Activated CD4-positive, alpha-beta T cell treated with anti-CD3 and anti-CD28 coated beads, Interleukin-2, amount 10 ng/mL, durations not matched to agents 7 days and 5 days (primary cell): ENCODE measurements at regions of chr7 and their contacts with region 1.

Region 1: DNA sequence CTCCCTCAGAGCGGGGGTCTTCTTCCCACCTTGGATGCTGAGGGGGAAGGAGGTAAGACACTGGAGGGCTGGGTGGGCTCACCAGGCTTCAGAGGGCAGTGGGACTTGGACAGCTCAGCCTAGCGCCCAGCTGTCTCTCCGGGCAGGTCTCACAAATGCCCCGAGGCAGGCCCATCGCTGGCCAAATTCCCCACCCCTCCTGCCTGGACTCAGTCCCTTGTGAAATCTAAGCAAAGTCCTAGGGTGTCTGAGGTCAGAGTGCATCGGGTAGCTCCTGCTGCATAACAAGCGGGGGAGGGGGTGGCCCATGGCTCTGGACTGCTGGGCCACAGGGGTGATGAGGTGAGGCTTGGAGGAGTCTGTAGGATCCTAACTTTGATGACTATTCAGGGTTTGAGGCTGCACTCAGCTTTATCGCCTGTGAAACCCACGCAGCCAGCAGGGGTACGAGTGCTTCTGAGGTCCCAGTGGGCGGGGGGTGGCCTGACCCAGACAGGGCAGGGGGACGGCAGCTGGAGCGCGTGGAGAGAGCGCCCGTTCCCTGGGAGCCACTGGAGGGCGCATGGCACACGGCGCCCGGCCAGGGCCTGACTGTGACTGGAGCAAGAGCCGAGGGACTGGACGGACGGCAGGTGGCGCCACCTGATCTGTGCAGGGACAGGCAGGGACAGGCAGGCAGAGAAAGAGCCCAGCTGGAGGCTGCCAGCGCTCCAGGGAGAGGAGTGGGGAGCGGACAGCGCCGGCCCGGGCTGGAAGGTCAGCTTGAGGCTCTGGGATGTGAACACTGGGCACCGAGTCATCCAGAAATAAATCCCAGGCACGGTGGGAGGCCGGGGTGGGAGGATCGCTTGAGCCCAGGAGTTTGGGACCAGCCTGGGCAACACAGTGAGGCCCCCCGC is 10.0 kb downstream of the CYP2W1 start:
- DNase-seq: peak; percentile 97
- H3K4me3 Mint-ChIP-seq: no peak overlapping the region
- H3K27ac Mint-ChIP-seq: no peak overlapping the region
- H3K4me1 Mint-ChIP-seq: peaks cover 4% of the 10 kb centered on the region
- H3K27me3 Mint-ChIP-seq: no peaks in the 10 kb centered on the region

Region 2: DNA sequence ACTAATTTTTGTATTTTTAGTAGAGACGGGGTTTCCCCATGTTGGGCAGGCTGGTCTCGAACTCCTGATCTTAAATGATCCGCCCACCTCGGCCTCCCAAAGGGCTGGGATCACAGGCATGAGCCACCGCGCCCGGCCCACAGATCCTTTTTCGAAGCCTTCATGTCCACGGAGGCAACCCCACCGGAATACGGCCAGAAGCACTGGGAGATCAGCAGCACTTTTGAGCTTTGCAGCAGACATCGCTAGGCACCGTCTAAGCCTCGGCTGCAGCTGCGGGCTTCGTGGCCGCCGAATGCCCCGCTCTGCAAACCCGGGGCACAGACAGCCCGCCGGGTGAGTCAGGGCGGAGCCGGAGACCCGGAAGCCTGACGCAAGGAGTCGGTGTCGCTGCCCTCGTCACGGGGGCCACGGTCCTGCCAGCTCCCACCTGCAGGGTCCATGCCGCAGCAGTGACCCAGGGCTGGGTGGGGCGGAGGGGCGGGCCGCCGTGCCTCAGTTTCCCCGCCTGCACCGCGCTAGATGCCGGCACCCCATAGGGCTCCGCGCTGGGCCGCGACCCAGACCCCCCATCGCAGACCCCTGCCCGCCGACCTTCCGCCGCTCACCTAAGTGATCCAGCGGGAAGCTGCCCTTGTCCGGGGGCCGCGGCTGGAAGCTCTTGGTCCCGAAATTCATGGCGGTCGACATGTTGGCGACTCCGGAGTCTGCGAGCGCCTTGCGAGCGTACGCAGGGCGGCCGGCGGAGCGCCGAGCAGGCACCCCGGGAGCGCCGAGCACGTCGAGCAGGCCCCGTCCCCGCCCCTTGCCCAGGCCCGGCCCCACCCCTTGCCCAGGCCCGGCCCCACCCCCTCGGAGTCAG is 17.9 kb before region 1 on chr7 and contains the start of gene COX19:
- CTCF ChIA-PET with region 1: interaction called, 61 read pairs
- POLR2A ChIA-PET with region 1: interaction called, 3 read pairs
- DNase-seq: peak; percentile 87
- H3K4me3 Mint-ChIP-seq: peak within 1 kb of the TSS; percentile 91
- H3K27ac Mint-ChIP-seq: peak within 1 kb of the TSS; percentile 91
- H3K4me1 Mint-ChIP-seq: peaks cover 28% of the 10 kb centered on the region
- H3K27me3 Mint-ChIP-seq: no peaks in the 10 kb centered on the region
- total RNA-seq, gene COX19: 18.2 to 20.1 TPM

Region 3: DNA sequence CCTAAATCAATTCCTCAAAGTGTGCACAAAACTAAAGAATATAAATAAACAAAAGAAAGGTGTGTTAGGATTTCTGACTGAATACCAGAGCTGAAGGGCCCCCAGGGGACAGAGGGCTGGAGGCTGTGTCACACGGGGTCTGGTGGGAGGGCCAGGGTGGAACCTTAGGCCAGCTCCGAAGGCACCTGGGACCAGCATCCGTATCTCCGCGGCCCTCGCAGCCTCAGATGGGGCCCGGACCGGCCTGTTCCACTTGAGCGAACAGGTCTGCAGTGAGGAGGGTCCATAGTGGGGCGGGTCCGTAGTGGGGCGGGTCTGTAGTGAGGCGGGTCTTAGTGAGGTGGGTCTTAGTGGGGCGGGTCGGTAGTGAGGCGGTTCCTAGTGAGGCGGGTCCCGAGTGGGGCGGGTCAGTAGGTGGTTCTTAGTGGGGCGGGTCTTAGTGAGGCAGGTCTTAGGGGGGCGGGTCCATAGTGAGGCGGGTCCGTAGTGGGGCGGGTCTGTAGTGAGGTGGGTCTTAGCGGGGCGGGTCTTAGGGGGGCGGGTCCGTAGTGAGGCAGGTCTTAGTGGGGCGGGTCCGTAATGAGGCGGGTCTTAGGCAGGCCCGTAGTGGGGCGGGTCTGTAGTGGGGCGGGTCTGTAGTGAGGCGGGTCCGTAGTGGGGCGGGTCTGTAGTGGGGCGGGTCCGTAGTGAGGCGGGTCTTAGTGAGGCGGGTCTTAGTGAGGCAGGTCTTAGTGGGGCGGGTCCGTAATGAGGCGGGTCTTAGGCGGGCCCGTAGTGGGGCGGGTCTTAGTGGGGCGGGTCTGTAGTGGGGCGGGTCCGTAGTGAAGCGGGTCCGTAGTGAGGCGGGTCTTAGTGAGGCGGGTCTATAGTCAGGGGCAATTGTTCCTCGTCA is 66.5 kb after region 1 on chr7:
- CTCF ChIA-PET with region 1: interaction called, 154 read pairs
- POLR2A ChIA-PET with region 1: interaction called, 3 read pairs
- DNase-seq: peak; percentile 28
- H3K4me3 Mint-ChIP-seq: no peak overlapping the region
- H3K27ac Mint-ChIP-seq: peak overlapping the region; percentile 69
- H3K4me1 Mint-ChIP-seq: peaks cover 30% of the 10 kb centered on the region
- H3K27me3 Mint-ChIP-seq: no peaks in the 10 kb centered on the region

Region 4: DNA sequence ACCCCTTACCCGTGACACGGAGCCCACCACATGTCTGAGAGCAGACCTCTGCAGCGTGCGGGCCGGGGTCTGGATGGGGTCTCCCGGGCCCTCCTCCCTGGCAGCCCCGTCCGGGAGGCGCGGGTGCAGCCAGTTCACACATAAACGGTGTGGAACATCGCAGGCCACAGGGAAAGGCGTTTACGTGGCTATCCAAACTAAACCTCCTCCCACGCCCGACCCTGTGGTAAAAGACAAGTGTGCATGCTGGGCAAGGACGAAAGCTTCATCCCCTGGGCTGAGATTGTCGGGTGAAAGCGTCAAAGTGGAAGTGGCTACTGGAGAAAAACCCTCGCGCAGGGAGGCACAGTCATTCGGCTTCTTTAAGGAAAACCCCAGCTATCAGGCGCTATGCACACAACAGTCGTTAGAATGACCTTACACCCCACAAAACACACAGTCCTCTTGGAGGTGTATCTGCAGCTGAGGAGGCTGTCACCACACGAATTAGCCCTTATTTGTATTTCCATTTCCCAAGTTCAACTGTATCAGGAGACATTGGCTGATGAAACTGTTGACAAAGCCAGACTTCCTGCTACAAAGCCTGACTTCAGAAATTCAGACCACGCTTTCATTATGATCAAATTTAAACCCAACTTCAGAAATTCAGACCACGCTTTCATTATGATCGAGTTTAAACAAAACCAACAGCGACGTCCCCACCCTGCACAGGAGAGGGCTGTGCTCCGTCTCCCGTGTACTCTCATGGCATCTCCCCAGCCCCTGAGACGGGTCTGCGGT is 110.2 kb after region 1 on chr7:
- CTCF ChIA-PET with region 1: interaction called, 10 read pairs
- POLR2A ChIA-PET with region 1: no interaction called
- DNase-seq: no peak
- H3K4me3 Mint-ChIP-seq: peak overlapping the region; percentile 6
- H3K27ac Mint-ChIP-seq: peak overlapping the region; percentile 74
- H3K4me1 Mint-ChIP-seq: peaks cover 22% of the 10 kb centered on the region
- H3K27me3 Mint-ChIP-seq: no peaks in the 10 kb centered on the region

Region 5: DNA sequence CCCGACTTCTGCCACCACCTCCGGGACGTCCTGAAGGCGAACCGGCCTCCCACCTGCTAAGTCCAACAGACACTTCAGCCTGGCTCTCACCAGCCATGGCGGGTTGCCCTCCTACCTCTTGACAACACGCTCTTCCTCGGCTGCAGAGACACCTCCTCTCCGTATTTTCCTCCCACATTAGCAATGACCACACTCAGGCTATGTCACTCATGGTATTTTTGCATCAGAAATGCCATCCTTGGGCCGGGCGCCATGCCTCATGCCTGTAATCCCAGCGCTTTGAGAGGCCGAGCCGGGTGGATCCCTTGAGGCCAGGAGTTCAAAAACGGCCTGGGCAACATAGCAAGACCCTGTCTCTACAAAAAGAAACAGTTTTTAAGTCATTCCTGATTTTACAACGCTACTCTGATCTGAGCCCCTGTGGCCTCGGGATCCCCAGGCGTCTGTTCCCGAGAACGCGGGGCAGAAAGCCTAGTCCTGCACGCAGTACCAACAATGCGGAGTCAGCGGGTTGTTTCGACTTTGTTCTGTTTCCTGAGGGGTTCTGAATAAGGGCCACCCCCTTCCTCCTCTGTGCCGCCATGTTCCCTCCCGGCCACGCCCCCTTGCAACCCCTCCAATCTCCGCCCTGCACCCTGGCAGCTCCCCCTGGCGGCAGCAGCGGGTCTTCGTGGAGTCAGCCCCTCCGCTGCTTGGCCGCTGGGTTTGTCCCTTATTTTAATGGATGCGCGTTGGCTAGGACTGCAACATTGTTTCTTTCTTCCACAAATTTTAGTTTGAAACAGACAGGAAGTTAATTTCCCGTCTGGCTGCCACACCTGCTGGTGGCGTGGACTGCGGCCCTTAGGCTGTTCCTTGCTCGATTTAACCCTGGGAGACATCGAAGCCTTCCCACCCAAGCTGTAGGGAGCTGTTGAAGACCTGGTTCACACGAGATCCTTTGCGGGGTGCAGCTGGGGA is 176.7 kb after region 1 on chr7:
- CTCF ChIA-PET with region 1: interaction called, 15 read pairs
- POLR2A ChIA-PET with region 1: no interaction called
- DNase-seq: peak; percentile 95
- H3K4me3 Mint-ChIP-seq: peak overlapping the region; percentile 75
- H3K27ac Mint-ChIP-seq: peak overlapping the region; percentile 94
- H3K4me1 Mint-ChIP-seq: peaks cover 18% of the 10 kb centered on the region
- H3K27me3 Mint-ChIP-seq: no peaks in the 10 kb centered on the region